Activated CD4-positive, alpha-beta T cell treated with anti-CD3 and anti-CD28 coated beads, Interleukin-2, amount 10 ng/mL, durations not matched to agents 24 days and 14 days (primary cell): ENCODE measurements at regions of chr3 and their contacts with region 1.

Region 1: GRCh38 chr3:132535575-132536441 is 61.3 kb upstream of the ACKR4 start:
- DNase-seq: peak; percentile 84
- H3K4me3 Mint-ChIP-seq: no peak overlapping the region
- H3K27ac Mint-ChIP-seq: peak overlapping the region; percentile 89
- H3K4me1 Mint-ChIP-seq: peaks cover 14% of the 10 kb centered on the region
- H3K27me3 Mint-ChIP-seq: no peaks in the 10 kb centered on the region

Region 2: GRCh38 chr3:132352541-132353143 is 183.2 kb before region 1 on chr3:
- intact Hi-C with region 1: loop called (anchors 1 kb)
- DNase-seq: peak; percentile 89
- H3K4me3 Mint-ChIP-seq: no peak overlapping the region
- H3K27ac Mint-ChIP-seq: no peak overlapping the region
- H3K4me1 Mint-ChIP-seq: peaks cover 1% of the 10 kb centered on the region
- H3K27me3 Mint-ChIP-seq: peaks cover 19% of the 10 kb centered on the region

Region 3: DNA sequence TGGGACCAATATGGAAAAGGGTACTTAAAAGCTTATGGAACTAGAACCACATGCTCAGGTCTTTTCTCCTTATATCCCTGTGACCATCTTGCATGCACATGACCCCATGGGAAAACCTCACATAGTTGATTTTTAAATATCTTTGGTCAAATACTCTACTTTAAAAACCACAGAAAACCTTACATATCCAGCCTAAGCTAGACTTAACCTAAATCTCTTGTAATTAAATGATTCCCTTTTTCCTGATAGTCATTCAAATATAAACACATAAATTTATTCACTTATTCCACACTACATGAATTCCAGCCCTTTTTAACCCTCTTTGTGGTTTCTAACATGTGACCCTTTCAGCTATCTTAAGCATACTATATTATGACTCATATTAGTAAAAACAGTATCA is 71.7 kb before region 1 on chr3:
- intact Hi-C with region 1: no loop called
- DNase-seq: no peak
- H3K4me3 Mint-ChIP-seq: no peak overlapping the region
- H3K27ac Mint-ChIP-seq: no peak overlapping the region
- H3K4me1 Mint-ChIP-seq: no peaks in the 10 kb centered on the region
- H3K27me3 Mint-ChIP-seq: no peaks in the 10 kb centered on the region

Region 4: GRCh38 chr3:132549890-132550578 is 14.2 kb after region 1 on chr3:
- intact Hi-C with region 1: loop called (anchors 2 kb)
- DNase-seq: peak; percentile 62
- H3K4me3 Mint-ChIP-seq: peak overlapping the region; percentile 70
- H3K27ac Mint-ChIP-seq: peak overlapping the region; percentile 98
- H3K4me1 Mint-ChIP-seq: peaks cover 30% of the 10 kb centered on the region
- H3K27me3 Mint-ChIP-seq: no peaks in the 10 kb centered on the region

Region 5: GRCh38 chr3:132569153-132569552 is 33.3 kb after region 1 on chr3:
- intact Hi-C with region 1: loop called (anchors 1 kb)
- DNase-seq: no peak
- H3K4me3 Mint-ChIP-seq: peak overlapping the region; percentile 6
- H3K27ac Mint-ChIP-seq: peak overlapping the region; percentile 86
- H3K4me1 Mint-ChIP-seq: peaks cover 18% of the 10 kb centered on the region
- H3K27me3 Mint-ChIP-seq: no peaks in the 10 kb centered on the region

Region 6: GRCh38 chr3:132641837-132642538 is 106.2 kb after region 1 on chr3:
- intact Hi-C with region 1: loop called (anchors 1 kb)
- DNase-seq: no peak
- H3K4me3 Mint-ChIP-seq: no peak overlapping the region
- H3K27ac Mint-ChIP-seq: no peak overlapping the region
- H3K4me1 Mint-ChIP-seq: peaks cover 7% of the 10 kb centered on the region
- H3K27me3 Mint-ChIP-seq: no peaks in the 10 kb centered on the region

Region 7: DNA sequence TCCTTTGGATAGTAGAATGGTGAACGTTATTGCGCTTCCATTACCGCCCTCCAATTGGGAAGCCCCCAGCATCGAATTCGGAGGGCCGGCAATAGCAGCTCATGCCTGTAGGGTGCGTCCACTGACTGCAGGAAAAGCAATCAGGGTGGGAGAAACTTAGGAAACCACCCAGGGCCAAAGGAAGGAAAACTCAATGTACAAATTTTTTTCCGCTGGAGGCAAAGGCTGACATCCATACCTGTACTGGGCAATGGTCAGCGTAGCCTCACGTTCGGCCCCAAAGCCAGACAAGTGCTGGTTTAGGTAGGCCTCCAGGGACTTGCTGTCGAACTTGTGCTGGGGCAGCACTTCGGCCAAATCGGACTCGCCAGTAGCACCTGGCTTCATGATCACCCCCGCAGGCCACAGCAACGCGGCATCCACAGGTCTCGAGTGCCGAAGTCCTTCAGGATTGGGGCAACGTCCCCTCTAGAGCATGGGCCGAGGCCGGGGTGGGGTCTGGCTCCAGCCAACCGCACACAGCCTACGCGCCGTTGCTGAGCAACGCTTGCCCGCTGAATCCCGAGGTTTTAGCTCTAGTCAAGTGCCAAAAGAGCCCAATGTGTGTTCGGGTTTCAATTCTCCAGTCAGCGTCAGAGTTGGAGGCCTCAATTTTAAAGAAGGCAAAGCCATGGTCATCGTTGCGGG is 123.7 kb after region 1 on chr3 and contains the start of gene ACAD11:
- intact Hi-C with region 1: loop called (anchors 5 kb)
- DNase-seq: peak; percentile 76
- H3K4me3 Mint-ChIP-seq: peak within 1 kb of the TSS; percentile 99
- H3K27ac Mint-ChIP-seq: peak within 1 kb of the TSS; percentile 98
- H3K4me1 Mint-ChIP-seq: peaks cover 39% of the 10 kb centered on the region
- H3K27me3 Mint-ChIP-seq: no peaks in the 10 kb centered on the region
- total RNA-seq, gene ACAD11: 12.9 and 18.9 TPM in 2 replicates